ENCODE measurements at regions of chr9 and their contacts with region 1.

Region 1: DNA sequence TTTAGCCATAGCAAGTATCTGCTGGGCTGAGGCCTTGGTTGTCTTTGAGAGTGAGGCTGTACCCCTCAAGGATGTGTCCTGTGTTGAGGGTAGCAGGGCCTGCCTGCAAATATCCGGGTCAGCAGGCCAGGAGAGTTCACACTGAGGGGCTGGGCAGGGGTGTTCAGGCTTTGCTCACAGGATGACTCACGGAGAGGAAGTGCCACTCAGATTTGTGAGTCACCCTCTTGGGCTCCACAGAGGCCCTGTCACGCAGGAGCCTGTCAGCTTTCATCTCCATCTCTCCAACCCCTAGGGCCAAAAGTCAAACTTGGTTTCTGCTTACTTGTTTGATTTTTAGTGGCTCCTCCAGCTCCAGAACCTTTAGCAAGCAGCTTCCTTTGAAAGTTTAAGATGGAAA is 211.5 kb downstream of the SEC61B start:
- DNase-seq: peak; percentile 47
- H3K4me3 Mint-ChIP-seq: no peak overlapping the region
- H3K27ac Mint-ChIP-seq: peak overlapping the region; percentile 76
- H3K4me1 Mint-ChIP-seq: peaks cover 18% of the 10 kb centered on the region
- H3K27me3 Mint-ChIP-seq: no peaks in the 10 kb centered on the region

Region 2: DNA sequence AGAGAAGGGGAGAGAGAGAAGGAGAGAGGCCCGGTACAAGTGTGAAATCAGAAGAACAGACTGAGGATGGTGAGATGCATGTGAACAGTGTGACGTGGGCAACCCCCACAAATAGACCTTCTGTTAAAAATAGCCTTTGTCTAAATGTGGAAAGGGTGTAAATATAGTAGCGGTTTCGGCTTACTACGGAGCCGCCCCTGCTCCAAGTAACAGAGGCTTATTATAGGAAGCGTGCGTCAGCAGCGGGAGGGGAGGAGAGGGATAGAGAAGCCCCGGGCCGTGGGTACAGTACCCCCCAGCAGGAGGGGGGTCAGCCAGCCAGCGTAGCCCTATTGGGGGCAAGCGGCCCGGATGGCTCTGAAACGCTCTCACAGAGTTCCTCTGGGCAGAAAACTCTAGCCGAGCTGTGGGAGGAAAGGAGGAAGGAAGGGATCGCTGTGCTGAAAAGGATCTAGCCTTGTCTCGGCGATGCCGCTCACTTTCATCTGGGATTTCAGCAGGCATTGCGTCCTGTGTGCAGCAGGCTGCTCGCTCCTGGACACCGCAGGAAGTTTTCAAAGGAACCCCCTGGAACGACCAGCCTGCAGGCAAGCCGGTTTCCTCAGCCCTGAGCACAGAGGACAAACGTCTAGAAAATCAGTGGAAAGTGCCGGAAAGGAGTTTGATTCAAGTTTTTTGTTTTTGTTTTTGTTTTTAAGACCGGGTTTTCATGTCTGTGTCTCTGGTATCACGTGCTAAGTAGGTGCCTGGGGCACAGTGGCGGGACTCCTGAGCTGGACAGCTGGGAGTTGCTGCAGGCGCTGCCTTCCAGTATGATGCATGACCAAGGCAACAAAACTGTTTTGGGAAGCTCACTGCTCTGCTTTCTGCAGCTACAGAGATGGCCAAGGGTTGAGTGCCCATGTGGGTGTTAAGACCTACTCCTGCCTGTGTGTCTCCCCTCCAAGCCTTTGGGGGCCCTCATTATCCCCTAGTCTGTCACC is 64.9 kb before region 1 on chr9:
- intact Hi-C with region 1: loop called (anchors 1 kb)
- DNase-seq: no peak
- H3K4me3 Mint-ChIP-seq: peak overlapping the region; percentile 71
- H3K27ac Mint-ChIP-seq: peak overlapping the region; percentile 25
- H3K4me1 Mint-ChIP-seq: peaks cover 35% of the 10 kb centered on the region
- H3K27me3 Mint-ChIP-seq: peaks cover 12% of the 10 kb centered on the region